PC-3 (cell line): ENCODE measurements at regions of chr14 and their contacts with region 1.

Region 1: GRCh38 chr14:80850197-80850814 is 91.2 kb downstream of the CEP128 start:
- DNase-seq: peak; percentile 71
- ATAC-seq: peak; percentile 45
- H3K4me3 ChIP-seq: no peak overlapping the region
- H3K27ac ChIP-seq: no peak overlapping the region
- H3K4me1 ChIP-seq: peaks cover 22% of the 10 kb centered on the region
- H3K27me3 ChIP-seq: no peaks in the 10 kb centered on the region
- CTCF ChIP-seq: peak; percentile 85

Region 2: DNA sequence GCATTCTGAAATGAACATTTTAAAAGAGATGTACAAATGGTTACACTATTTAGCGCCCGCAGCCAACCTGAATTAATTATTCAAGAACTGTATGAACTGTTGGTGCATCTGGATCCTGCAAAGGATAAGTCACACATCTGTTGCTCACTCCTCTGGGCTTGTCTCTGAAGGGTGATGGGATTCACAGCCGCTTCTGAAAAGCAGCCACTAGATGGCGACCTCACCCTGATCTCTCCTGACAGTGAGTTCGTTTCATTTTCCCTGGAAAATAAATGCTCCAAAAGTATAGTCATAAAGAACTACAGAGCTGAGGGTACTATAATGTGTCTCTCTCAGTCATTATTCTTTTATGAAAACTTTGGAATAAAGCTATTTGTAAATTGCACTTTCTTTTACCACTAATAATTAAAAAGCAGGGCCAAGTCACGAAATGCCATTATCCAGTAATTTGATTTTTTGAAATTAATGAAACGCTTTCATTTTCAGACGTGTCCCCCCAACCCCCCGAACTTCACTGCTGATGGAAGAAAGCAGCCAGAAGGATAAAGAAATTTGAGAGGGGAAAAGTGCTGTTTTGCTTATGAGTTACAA is 1890.5 kb before region 1 on chr14:
- CTCF ChIA-PET with region 1: no interaction called
- POLR2A ChIA-PET with region 1: no interaction called
- intact Hi-C with region 1: loop called (anchors 10 kb)
- DNase-seq: peak; percentile 78
- ATAC-seq: peak; percentile 88
- H3K4me3 ChIP-seq: no peak overlapping the region
- H3K27ac ChIP-seq: no peak overlapping the region
- H3K4me1 ChIP-seq: no peaks in the 10 kb centered on the region
- H3K27me3 ChIP-seq: no peaks in the 10 kb centered on the region
- CTCF ChIP-seq: peak; percentile 93

Region 3: GRCh38 chr14:80213599-80213998 is 636.7 kb before region 1 on chr14:
- CTCF ChIA-PET with region 1: no interaction called
- POLR2A ChIA-PET with region 1: no interaction called
- intact Hi-C with region 1: loop called (anchors 1 kb)
- DNase-seq: peak; percentile 81
- ATAC-seq: peak; percentile 33; the same call in 1 of the 2 replicates
- H3K4me3 ChIP-seq: no peak overlapping the region
- H3K27ac ChIP-seq: peak overlapping the region; percentile 28
- H3K4me1 ChIP-seq: peaks cover 31% of the 10 kb centered on the region
- H3K27me3 ChIP-seq: no peaks in the 10 kb centered on the region
- CTCF ChIP-seq: peak; percentile 88

Region 4: GRCh38 chr14:80572666-80573065 is 277.6 kb before region 1 on chr14:
- CTCF ChIA-PET with region 1: no interaction called
- POLR2A ChIA-PET with region 1: no interaction called
- intact Hi-C with region 1: loop called (anchors 5 kb)
- DNase-seq: no peak
- ATAC-seq: no peak
- H3K4me3 ChIP-seq: no peak overlapping the region
- H3K27ac ChIP-seq: no peak overlapping the region
- H3K4me1 ChIP-seq: peaks cover 51% of the 10 kb centered on the region
- H3K27me3 ChIP-seq: no peaks in the 10 kb centered on the region
- CTCF ChIP-seq: no peak

Region 5: GRCh38 chr14:80638620-80639515 is 211.4 kb before region 1 on chr14:
- CTCF ChIA-PET with region 1: interaction called, 3 read pairs
- POLR2A ChIA-PET with region 1: no interaction called
- intact Hi-C with region 1: loop called (anchors 1 kb)
- DNase-seq: peak; percentile 96
- ATAC-seq: peak; percentile 98
- H3K4me3 ChIP-seq: 0 out of 2 replicates have a peak overlapping the region, but pooled peaks have one; percentile 2
- H3K27ac ChIP-seq: peak overlapping the region; percentile 87
- H3K4me1 ChIP-seq: peaks cover 46% of the 10 kb centered on the region
- H3K27me3 ChIP-seq: no peaks in the 10 kb centered on the region
- CTCF ChIP-seq: no peak

Region 6: DNA sequence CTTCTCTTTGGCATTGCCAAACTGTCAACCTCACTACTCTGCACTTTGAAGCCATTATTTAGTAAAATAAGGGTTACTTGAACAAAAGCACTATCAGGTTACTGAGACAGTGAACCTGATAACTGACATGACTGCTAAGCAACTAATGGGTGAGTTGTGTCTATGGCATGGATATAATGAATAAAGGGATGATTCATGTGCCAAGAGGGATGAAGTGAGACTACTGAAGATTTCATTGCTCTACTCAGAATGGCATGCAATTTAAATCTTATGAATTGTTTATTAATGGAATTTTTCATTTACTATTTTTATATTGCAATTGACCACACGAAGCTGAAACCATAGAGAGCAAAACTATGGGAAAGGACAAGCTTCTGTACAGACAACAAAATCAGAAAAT is 16.8 kb after region 1 on chr14:
- CTCF ChIA-PET with region 1: no interaction called
- POLR2A ChIA-PET with region 1: no interaction called
- intact Hi-C with region 1: no loop called
- DNase-seq: peak; percentile 18
- ATAC-seq: no peak
- H3K4me3 ChIP-seq: no peak overlapping the region
- H3K27ac ChIP-seq: no peak overlapping the region
- H3K4me1 ChIP-seq: 0 out of 2 replicates have a peak, but pooled peaks cover under 1% of the 10 kb centered on the region
- H3K27me3 ChIP-seq: no peaks in the 10 kb centered on the region
- CTCF ChIP-seq: no peak